Transverse colon (tissue), 4 donors: ENCODE measurements at regions of chr4 and their contacts with region 1.

Region 1: GRCh38 chr4:48578132-48578968 is 88.3 kb downstream of the ZAR1 start:
- DNase-seq: peak; percentile 59
- H3K4me3 ChIP-seq: no peak overlapping the region
- H3K27ac ChIP-seq: no peak overlapping the region
- H3K4me1 ChIP-seq: no peaks in the 10 kb centered on the region
- H3K27me3 ChIP-seq: no peaks in the 10 kb centered on the region
- CTCF ChIP-seq: peak; percentile 86 to 90 (median 88)
- EP300 ChIP-seq: no peak
- POLR2A ChIP-seq: no peak

Region 2: DNA sequence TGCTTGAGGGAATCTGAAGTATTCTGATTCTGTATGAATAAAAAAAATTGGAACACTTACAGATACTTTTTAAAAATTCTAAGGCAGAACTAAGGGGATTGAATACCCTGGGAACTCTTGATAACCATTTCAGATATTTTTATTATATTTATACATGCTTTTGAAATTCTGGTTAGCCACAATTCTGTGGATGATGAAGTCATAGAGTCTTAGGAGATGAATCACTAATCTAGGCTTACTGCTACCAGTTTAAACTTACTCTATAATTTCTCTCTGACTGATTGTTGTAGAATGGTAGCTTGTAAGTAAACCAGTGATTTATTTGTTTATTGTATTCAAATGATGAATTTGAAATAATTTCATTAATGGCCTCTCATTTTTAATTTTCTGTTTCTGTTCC is 248.4 kb before region 1 on chr4:
- in situ Hi-C with region 1: no loop called
- intact Hi-C with region 1: no loop called
- DNase-seq: no peak
- H3K4me3 ChIP-seq: no peak overlapping the region
- H3K27ac ChIP-seq: peak overlapping the region in 2 of 4 donors; percentile 2 to 14
- H3K4me1 ChIP-seq: peaks cover 4 to 23% (median 10%) of the 10 kb centered on the region in 4 donors
- H3K27me3 ChIP-seq: no peaks in the 10 kb centered on the region
- CTCF ChIP-seq: no peak
- EP300 ChIP-seq: no peak
- POLR2A ChIP-seq: no peak

Region 3: GRCh38 chr4:48681856-48682255 is 103.5 kb after region 1 on chr4:
- in situ Hi-C with region 1: loop called in 1 of 4 experiments (anchors 25 kb)
- intact Hi-C with region 1: no loop called
- DNase-seq: no peak
- H3K4me3 ChIP-seq: peak overlapping the region in 1 of 4 donors; percentile 51
- H3K27ac ChIP-seq: peak overlapping the region; percentile 67 to 87 (median 79)
- H3K4me1 ChIP-seq: peaks cover 0 to 26% (median 14%) of the 10 kb centered on the region in 4 donors
- H3K27me3 ChIP-seq: no peaks in the 10 kb centered on the region
- CTCF ChIP-seq: peak; percentile 11 to 59 (median 38)
- EP300 ChIP-seq: no peak
- POLR2A ChIP-seq: no peak

Region 4: DNA sequence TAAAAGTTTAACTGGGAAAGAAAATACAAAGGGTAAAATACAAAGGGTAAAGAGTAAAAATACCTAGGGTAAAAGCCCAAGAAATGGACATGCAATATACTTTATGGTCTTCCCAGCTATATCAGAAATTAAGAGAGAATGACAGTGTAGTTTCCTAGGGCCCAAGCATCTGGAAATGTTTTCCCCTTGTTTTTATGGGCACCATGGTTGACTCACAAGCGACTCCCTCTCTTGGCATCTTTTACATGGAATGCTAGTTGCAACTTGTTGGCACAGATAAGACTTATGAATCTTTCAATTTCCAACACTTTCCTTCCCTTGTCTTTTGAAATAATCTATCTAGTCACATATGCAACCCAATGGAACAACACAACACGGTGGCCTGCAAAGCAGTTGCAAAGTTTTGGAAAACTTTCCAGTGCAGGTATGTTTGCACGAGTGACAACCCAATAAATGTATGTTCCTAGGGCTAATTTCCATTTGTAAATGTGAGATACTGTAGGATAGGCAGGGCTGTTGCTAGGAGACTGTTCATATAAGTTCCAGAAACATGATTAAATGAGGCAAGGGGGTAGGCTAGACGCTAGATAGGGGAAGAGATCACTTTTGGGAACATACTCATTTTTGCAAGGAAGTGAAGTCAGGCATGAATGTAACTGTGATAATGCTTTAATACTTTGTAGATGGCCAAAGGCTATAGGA is 371.3 kb after region 1 on chr4:
- in situ Hi-C with region 1: loop called in 2 of 4 experiments (anchors 10 to 25 kb)
- intact Hi-C with region 1: no loop called
- DNase-seq: no peak
- H3K4me3 ChIP-seq: no peak overlapping the region
- H3K27ac ChIP-seq: peak overlapping the region in 3 of 4 donors; percentile 17 to 41 (median 31)
- H3K4me1 ChIP-seq: peaks cover 0 to 24% (median 8%) of the 10 kb centered on the region in 4 donors
- H3K27me3 ChIP-seq: no peaks in the 10 kb centered on the region
- CTCF ChIP-seq: no peak
- EP300 ChIP-seq: no peak
- POLR2A ChIP-seq: no peak

Region 5: GRCh38 chr4:48963042-48963679 is 384.8 kb after region 1 on chr4:
- in situ Hi-C with region 1: loop called (anchors 5 to 25 kb)
- intact Hi-C with region 1: loop called (anchors 5 kb)
- DNase-seq: peak; percentile 78
- H3K4me3 ChIP-seq: no peak overlapping the region
- H3K27ac ChIP-seq: no peak overlapping the region
- H3K4me1 ChIP-seq: no peaks in the 10 kb centered on the region
- H3K27me3 ChIP-seq: no peaks in the 10 kb centered on the region
- CTCF ChIP-seq: peak; percentile 92 to 97 (median 95)
- EP300 ChIP-seq: no peak
- POLR2A ChIP-seq: no peak